ENCODE measurements at regions of chr3 and their contacts with region 1.

Region 1: DNA sequence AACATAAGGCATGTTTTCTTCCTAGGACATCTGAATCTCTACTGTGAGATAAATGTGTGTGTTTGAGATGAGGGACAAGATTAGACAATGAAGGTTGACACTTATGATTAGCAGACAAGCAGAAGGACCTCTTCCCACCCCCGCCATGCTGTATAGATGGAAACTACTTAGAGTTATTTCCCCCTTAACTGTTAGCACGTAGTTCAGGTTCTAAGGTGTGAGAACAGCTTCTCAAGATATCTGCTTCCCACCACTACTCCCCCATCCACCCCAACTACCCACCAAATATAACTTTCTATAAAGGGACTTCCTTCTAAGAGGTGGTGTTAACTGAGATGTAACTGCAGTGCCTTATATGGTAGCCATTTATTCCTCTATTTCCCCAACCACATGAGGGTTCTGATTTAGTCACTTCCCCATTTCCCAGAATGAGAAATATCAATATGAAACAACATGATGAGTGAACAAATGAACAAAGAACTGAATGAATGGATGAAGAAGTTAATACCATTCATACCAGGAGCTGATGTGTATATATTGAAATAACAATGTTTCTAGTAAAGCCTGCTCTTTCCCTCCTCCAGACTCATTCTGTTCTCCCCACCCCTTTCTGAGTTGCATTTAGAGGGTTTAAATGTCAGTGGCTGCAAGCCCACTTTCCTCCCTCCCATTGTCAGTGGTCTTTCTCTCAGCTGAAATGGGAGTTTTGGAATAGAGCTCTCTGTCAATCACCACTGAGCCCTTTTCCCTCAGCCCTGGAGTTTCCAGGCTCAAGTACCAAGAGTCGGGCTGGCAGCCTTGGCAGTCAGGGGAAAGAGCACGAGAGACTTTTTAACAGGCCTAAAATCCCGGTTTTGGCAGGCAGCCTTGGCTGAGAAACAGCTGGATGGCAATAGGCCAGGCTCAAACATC is 7.7 kb upstream of the RFTN1 start:
- DNase-seq: peak; percentile 46
- H3K4me3 Mint-ChIP-seq: no peak overlapping the region
- H3K27ac Mint-ChIP-seq: peak overlapping the region; percentile 89
- H3K4me1 Mint-ChIP-seq: peaks cover 71% of the 10 kb centered on the region
- H3K27me3 Mint-ChIP-seq: no peaks in the 10 kb centered on the region

Region 2: DNA sequence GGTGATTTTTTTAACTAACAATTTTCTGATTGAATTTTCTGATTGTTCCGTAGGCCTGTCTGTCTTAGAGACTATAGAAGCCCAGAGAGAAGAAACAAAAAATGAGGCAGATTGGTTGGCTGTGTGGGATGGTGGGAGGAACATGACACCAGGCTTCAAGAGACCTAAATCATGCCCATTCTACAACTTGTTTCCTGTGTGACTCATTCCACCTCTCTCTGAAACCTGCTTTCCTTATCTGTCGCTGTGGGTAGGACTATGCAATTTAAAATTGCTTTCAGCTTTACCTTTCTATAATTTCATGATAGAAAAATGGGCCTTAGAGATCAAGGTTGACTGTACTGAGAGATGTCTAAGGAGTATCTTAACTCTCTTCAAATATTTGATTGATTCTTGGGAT is 211.7 kb before region 1 on chr3:
- CTCF ChIA-PET with region 1: interaction called, 4 read pairs
- POLR2A ChIA-PET with region 1: interaction called, 3 read pairs
- intact Hi-C with region 1: loop called (anchors 1 kb)
- DNase-seq: peak; percentile 76
- H3K4me3 Mint-ChIP-seq: peak overlapping the region; percentile 33
- H3K27ac Mint-ChIP-seq: peak overlapping the region; percentile 84
- H3K4me1 Mint-ChIP-seq: peaks cover 91% of the 10 kb centered on the region
- H3K27me3 Mint-ChIP-seq: no peaks in the 10 kb centered on the region

Region 3: GRCh38 chr3:16470590-16470989 is 50.6 kb before region 1 on chr3:
- CTCF ChIA-PET with region 1: no interaction called
- POLR2A ChIA-PET with region 1: no interaction called
- intact Hi-C with region 1: no loop called
- DNase-seq: no peak
- H3K4me3 Mint-ChIP-seq: no peak overlapping the region
- H3K27ac Mint-ChIP-seq: no peak overlapping the region
- H3K4me1 Mint-ChIP-seq: peaks cover 40% of the 10 kb centered on the region
- H3K27me3 Mint-ChIP-seq: no peaks in the 10 kb centered on the region

Region 4: DNA sequence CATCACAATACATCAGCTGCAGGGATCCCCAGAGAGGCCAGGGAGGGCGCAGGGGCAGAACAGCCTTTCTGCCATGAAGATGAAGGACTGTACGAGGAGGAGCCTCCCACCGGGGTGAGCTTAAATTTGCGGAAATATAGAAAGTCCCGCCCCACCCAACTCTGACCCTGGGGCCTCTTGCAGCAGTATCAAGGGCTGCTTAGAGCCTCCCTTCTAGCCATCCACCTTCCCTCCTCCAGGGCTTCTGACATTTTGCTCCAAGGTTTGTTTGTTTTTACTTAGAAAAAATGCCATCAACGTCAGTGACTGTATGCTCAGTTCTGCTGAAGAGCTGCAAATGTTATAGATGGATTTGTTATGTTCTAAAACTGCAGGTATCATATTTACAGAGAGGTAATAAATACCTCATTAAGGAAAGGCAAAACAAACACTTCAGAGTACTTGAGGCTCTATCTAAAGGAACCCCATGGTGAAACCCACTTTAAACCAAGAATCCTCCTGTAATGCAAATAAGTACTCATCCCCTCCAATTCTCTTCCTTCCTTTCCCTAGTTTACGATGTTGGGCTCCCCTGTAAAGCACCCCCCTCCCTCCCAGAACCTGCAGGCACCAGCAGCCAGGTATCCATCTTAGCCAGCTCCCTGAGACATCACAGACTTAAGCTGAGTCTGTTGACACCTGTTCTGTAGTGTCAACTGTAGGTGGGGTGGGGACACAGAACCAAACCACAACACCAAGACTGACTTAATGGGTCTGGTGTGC is 38.3 kb before region 1 on chr3:
- CTCF ChIA-PET with region 1: no interaction called
- POLR2A ChIA-PET with region 1: no interaction called
- intact Hi-C with region 1: loop called (anchors 2 kb)
- DNase-seq: peak; percentile 50
- H3K4me3 Mint-ChIP-seq: peak overlapping the region; percentile 35
- H3K27ac Mint-ChIP-seq: peak overlapping the region; percentile 76
- H3K4me1 Mint-ChIP-seq: peaks cover 72% of the 10 kb centered on the region
- H3K27me3 Mint-ChIP-seq: no peaks in the 10 kb centered on the region

Region 5: GRCh38 chr3:18279226-18279737 is 1758.1 kb after region 1 on chr3:
- CTCF ChIA-PET with region 1: no interaction called
- POLR2A ChIA-PET with region 1: no interaction called
- intact Hi-C with region 1: no loop called
- DNase-seq: no peak
- H3K4me3 Mint-ChIP-seq: no peak overlapping the region
- H3K27ac Mint-ChIP-seq: no peak overlapping the region
- H3K4me1 Mint-ChIP-seq: no peaks in the 10 kb centered on the region
- H3K27me3 Mint-ChIP-seq: peaks cover 3% of the 10 kb centered on the region

Measured in activated CD4-positive, alpha-beta memory T cell treated with anti-CD3 and anti-CD28 coated beads for 36 hours (primary cell).